Heart left ventricle (tissue), 16 donors: ENCODE measurements at regions of chr15 and their contacts with region 1.

Region 1: GRCh38 chr15:31977812-31978661 is 52.3 kb upstream of the CHRNA7 start:
- DNase-seq: peak; percentile 30 to 79 (median 40)
- ATAC-seq: peak; percentile 59 to 77 (median 70)
- H3K4me3 ChIP-seq: no peak overlapping the region
- H3K27ac ChIP-seq: no peak overlapping the region
- H3K4me1 ChIP-seq: peaks cover 0 to 10% (median 7%) of the 10 kb centered on the region in 12 donors
- H3K27me3 ChIP-seq: peaks cover 0 to 51% (median 10%) of the 10 kb centered on the region in 9 donors
- CTCF ChIP-seq: peak; percentile 67 to 92 (median 77)
- POLR2A ChIP-seq: no peak

Region 2: DNA sequence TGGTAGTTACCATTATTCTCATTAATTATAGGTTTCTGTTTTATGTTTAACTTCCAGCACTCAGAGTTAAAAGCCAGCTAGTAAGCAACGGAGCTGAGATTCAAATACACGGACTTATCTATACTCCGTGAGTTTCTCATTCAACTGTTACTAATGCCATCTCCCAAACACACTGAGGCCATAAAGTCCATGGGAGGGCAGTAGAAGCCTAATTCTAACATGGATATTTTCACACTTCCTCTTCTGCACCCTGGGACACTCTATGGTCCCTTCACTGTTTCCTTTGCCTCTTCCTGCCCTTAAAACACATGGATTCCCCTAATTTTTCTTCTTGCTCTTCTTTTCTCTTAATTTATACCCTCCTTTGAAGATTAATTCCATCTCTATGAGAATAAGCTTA is 406.4 kb before region 1 on chr15:
- intact Hi-C with region 1: loop called in 2 of 10 experiments (anchors 10 kb)
- DNase-seq: no peak
- ATAC-seq: peak in 2 of 4 donors; percentile 52 to 60
- H3K4me3 ChIP-seq: no peak overlapping the region
- H3K27ac ChIP-seq: no peak overlapping the region
- H3K4me1 ChIP-seq: peaks cover 0 to 9% (median 0%) of the 10 kb centered on the region in 12 donors
- H3K27me3 ChIP-seq: no peaks in the 10 kb centered on the region
- CTCF ChIP-seq: peak in 6 of 12 donors; percentile 8 to 49 (median 22)
- POLR2A ChIP-seq: no peak

Region 3: GRCh38 chr15:31905054-31905453 is 73.0 kb before region 1 on chr15:
- intact Hi-C with region 1: loop called in 1 of 10 experiments (anchors 10 kb)
- DNase-seq: no peak
- ATAC-seq: peak in 3 of 4 donors; percentile 51 to 84 (median 80)
- H3K4me3 ChIP-seq: no peak overlapping the region
- H3K27ac ChIP-seq: no peak overlapping the region
- H3K4me1 ChIP-seq: peaks cover 0 to 10% (median 0%) of the 10 kb centered on the region in 12 donors
- H3K27me3 ChIP-seq: no peaks in the 10 kb centered on the region
- CTCF ChIP-seq: no peak
- POLR2A ChIP-seq: no peak

Region 4: GRCh38 chr15:31934821-31935220 is 43.2 kb before region 1 on chr15:
- intact Hi-C with region 1: loop called in 1 of 10 experiments (anchors 5 kb)
- DNase-seq: no peak
- ATAC-seq: no peak
- H3K4me3 ChIP-seq: no peak overlapping the region
- H3K27ac ChIP-seq: no peak overlapping the region
- H3K4me1 ChIP-seq: no peaks in the 10 kb centered on the region
- H3K27me3 ChIP-seq: peaks cover 0 to 16% (median 0%) of the 10 kb centered on the region in 9 donors
- CTCF ChIP-seq: no peak
- POLR2A ChIP-seq: no peak